ENCODE measurements at regions of chr9 and their contacts with region 1.

Region 1: DNA sequence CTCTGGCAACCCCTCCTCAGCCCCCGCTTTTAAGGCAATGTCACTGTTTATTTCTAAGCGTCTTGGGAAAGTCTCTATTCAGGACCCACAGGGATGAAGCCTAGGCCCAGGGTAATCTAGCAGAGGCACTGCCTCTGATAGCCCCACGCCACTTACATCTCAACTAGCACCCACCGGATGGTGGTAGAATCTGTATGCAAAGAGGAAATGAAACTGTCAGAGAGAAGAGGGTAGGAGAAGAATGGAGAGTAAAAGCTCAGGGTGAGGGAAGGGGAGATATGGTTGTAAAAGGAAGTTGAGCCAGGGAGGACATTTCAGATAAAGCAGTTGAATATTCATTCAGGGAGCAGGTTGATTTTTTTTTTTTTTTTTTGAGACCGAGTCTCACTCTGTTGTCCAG is 3.0 kb downstream of the FRRS1L start:
- DNase-seq: no peak
- CTCF ChIP-seq: no peak

Region 2: GRCh38 chr9:108963459-108964143 is 200.4 kb before region 1 on chr9:
- CTCF ChIA-PET with region 1: no interaction called
- POLR2A ChIA-PET with region 1: no interaction called
- DNase-seq: no peak
- CTCF ChIP-seq: no peak

Region 3: GRCh38 chr9:109182940-109183798 is 19.1 kb after region 1 on chr9:
- CTCF ChIA-PET with region 1: interaction called, 10 read pairs
- POLR2A ChIA-PET with region 1: no interaction called
- DNase-seq: peak; percentile 50
- CTCF ChIP-seq: peak; percentile 52

Measured in GM10248 (cell line).